Caco-2 (cell line): ENCODE measurements at regions of chr9 and their contacts with region 1.

Region 1: GRCh38 chr9:136363606-136364370 is at the start of gene DNLZ:
- DNase-seq: peak; percentile 79 to 92
- H3K4me3 ChIP-seq: peak within 1 kb of the TSS; percentile 98
- H3K4me3 Mint-ChIP-seq: peak within 1 kb of the TSS; percentile 73
- H3K27ac Mint-ChIP-seq: peak within 1 kb of the TSS; percentile 32
- H3K4me1 ChIP-seq: peaks cover 7% of the 10 kb centered on the region
- H3K4me1 Mint-ChIP-seq: no peaks in the 10 kb centered on the region
- H3K27me3 ChIP-seq: no peaks in the 10 kb centered on the region
- H3K27me3 Mint-ChIP-seq: no peaks in the 10 kb centered on the region
- CTCF ChIP-seq: peak; percentile 87 to 97
- total RNA-seq, gene DNLZ: 27.1 and 29.1 TPM in 2 replicates

Region 2: DNA sequence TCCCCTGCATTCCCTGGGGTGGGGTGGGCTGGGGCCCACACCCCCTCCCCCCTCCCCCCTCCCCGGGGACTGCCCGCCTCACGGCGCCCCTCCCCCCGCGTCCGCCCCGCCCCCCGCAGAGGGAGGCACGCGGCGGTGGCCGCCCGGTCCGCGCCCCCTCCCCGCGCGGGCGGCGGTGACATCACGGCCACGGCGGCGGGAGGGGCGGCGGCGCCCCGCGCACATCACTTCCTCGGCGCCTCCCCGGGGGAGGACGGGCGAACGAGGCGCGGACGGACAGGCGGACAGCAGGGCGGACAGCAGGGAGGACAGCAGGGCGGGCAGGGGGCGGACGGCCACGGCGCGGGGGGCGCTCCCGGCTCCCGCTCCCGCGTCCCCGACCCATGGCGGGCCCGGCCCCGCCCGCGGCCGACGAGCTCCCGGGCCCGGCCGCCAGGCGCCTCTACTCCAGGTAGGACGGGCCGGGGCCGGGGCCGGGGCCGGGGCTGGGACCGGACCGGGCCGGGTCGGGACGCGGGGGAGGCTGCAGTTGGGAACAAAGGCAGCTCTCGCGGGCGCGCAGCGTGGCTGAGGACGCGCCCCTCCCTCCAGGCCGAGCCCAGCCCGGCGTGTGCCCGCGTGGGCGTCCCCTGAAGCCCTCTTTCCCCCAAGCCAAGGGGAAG is 36.3 kb before region 1 on chr9 and contains the start of gene GPSM1:
- CTCF ChIA-PET with region 1: no interaction called
- POLR2A ChIA-PET with region 1: interaction called, 8 read pairs
- intact Hi-C with region 1: loop called (anchors 5 kb)
- DNase-seq: peak in 1 of 2 experiments; percentile 66
- H3K4me3 ChIP-seq: peak within 1 kb of the TSS; percentile 63
- H3K4me3 Mint-ChIP-seq: peak within 1 kb of the TSS; percentile 68
- H3K27ac Mint-ChIP-seq: no peak within 1 kb of the TSS
- H3K4me1 ChIP-seq: peaks cover 34% of the 10 kb centered on the region
- H3K4me1 Mint-ChIP-seq: peaks cover 6% of the 10 kb centered on the region
- H3K27me3 ChIP-seq: no peaks in the 10 kb centered on the region
- H3K27me3 Mint-ChIP-seq: no peaks in the 10 kb centered on the region
- CTCF ChIP-seq: no peak
- total RNA-seq, gene GPSM1: 25.7 and 26.5 TPM in 2 replicates

Region 3: DNA sequence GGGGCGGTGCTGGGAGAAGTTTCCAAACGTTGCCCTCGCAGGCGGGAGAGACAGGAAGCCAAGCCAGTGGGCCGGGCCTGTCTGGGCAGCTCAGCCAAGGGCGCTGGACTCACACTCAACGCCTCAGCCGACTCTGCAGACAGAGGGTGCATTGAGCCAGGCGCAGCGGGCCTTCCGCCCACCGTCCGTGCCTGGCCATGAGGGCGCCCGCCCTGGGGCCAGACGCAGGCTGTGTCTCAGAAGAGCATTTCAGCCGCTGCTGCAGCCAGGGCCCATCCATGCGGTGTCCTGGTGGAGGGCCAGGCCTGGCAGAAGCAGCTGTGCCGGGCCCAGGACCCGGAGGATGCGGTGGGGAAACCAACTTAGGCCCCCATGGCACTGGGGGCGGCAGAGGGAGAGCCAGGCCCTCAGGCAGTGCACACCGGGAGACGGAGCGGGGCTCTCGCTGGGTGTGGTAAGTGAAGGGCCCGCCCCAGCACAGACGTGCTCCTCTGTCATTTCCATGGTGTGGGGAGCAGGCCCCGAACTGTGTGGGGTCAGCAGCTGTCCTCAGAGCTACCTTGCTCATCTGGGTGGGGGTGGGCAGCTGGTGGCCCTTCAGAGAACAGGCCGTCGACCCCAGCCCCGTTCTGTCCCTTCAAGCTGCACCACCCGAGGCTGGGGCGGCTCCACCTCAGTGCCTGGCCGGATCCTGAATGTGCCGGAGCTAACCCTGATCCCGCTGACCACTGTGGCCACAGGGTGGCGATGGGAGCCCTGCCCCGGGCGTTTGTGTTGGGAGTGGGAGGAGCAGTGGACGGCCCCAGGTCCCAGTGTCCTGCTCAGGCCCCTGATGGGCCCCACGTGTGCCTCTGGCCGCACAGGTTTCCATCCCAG is 18.3 kb before region 1 on chr9:
- CTCF ChIA-PET with region 1: interaction called, 49 read pairs
- POLR2A ChIA-PET with region 1: interaction called, 13 read pairs
- intact Hi-C with region 1: loop called (anchors 1 kb)
- DNase-seq: peak; percentile 86 to 91
- H3K4me3 ChIP-seq: no peak overlapping the region
- H3K4me3 Mint-ChIP-seq: no peak overlapping the region
- H3K27ac Mint-ChIP-seq: peak overlapping the region; percentile 1
- H3K4me1 ChIP-seq: peaks cover 20% of the 10 kb centered on the region
- H3K4me1 Mint-ChIP-seq: no peaks in the 10 kb centered on the region
- H3K27me3 ChIP-seq: no peaks in the 10 kb centered on the region
- H3K27me3 Mint-ChIP-seq: no peaks in the 10 kb centered on the region
- CTCF ChIP-seq: peak; percentile 63 to 75